Breast epithelium (tissue), 4 donors: ENCODE measurements at regions of chr9 and their contacts with region 1.

Region 1: DNA sequence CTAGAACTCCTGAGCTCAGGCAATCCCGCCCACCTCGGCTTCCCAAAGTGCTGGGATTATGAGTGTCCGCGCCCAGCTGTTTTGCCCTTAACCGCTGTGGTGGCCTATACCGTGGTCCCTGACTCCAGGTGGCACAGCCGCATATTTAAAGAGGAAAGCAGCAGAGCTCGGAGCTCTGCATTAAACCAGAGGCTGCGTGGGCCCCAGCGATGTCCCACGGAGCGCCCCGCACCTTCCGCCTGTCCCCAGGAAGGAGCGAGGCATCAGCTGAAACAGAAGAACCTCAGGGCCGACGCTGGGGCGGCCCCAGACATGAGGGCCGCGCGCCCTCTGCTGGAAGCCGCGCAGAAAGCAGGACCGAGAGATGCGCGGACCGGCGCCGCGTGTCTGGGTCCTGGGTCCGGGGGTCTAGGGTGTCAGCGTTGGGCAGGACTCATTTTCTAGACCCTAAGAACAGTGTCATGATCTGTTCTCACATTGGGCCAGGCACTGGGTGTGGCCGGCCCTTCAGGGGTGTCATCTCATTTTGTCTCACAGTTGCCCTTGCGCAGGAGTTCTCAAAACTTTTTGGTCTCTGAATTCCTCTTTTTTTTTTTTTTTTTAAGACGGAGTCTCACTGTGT is 37.7 kb downstream of the LAMC3 start:
- DNase-seq: peak in 1 of 2 donors; percentile 25
- H3K4me3 ChIP-seq: peak overlapping the region in 2 of 3 donors; percentile 16 to 35
- H3K27ac ChIP-seq: no peak overlapping the region
- H3K4me1 ChIP-seq: no peaks in the 10 kb centered on the region
- H3K27me3 ChIP-seq: peaks cover 0 to 5% of the 10 kb centered on the region in 2 donors
- CTCF ChIP-seq: peak; percentile 80 to 85 (median 81)
- POLR2A ChIP-seq: no peak

Region 2: GRCh38 chr9:131100445-131100844 is 53.8 kb after region 1 on chr9:
- intact Hi-C with region 1: loop called (anchors 10 kb)
- DNase-seq: no peak
- H3K4me3 ChIP-seq: no peak overlapping the region
- H3K27ac ChIP-seq: no peak overlapping the region
- H3K4me1 ChIP-seq: no peaks in the 10 kb centered on the region
- H3K27me3 ChIP-seq: peaks cover 0 to 3% of the 10 kb centered on the region in 2 donors
- CTCF ChIP-seq: no peak
- POLR2A ChIP-seq: no peak